ENCODE measurements at regions of chr14 and their contacts with region 1.

Region 1: DNA sequence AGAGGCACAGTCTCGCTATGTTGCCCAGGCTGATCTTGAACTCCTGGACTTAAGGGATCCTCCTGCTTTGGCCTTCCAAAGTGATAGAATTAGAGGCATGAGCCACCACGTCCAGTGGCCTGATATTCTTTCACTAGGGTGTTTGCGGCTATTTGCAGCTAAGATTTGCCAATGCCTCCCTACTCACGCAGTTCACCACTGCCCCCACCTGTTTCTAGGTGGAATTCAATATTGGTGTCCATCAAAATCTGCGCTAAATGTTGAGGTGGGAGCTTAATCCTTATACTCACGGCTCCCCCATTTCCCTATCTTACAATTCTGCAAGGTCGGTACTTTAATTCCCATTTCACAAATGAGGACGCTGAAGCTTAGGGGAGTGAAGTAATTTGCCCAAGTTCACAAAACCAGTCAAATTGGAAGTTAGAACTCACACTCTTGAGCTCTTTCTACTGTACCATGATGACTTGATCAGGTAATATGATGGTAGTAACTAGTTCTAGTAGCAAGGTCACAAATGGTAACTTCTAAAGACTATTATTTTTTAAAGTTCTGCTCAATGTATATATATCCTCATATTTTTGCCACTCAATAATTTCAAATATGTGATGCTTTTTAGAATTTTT is 22.1 kb upstream of the LRRC9 start:
- DNase-seq: peak; percentile 51
- H3K4me3 ChIP-seq: no peak overlapping the region; a peak in 1 of 4 replicates
- H3K27ac ChIP-seq: no peak overlapping the region
- H3K4me1 ChIP-seq: no peaks in the 10 kb centered on the region
- H3K27me3 ChIP-seq: no peaks in the 10 kb centered on the region
- CTCF ChIP-seq: peak; percentile 50
- EP300 ChIP-seq: no peak
- RAD21 ChIP-seq: peak; percentile 91

Region 2: GRCh38 chr14:59564366-59564765 is 333.5 kb before region 1 on chr14:
- CTCF ChIA-PET with region 1: no interaction called
- POLR2A ChIA-PET with region 1: no interaction called
- DNase-seq: no peak
- H3K4me3 ChIP-seq: no peak overlapping the region
- H3K27ac ChIP-seq: no peak overlapping the region
- H3K4me1 ChIP-seq: peaks cover 0 to 7% of the 10 kb centered on the region in 2 experiments; a peak in 2 of 4 replicates
- H3K27me3 ChIP-seq: no peaks in the 10 kb centered on the region; the same call in 1 of the 2 replicates
- CTCF ChIP-seq: no peak
- EP300 ChIP-seq: no peak
- RAD21 ChIP-seq: no peak

Region 3: DNA sequence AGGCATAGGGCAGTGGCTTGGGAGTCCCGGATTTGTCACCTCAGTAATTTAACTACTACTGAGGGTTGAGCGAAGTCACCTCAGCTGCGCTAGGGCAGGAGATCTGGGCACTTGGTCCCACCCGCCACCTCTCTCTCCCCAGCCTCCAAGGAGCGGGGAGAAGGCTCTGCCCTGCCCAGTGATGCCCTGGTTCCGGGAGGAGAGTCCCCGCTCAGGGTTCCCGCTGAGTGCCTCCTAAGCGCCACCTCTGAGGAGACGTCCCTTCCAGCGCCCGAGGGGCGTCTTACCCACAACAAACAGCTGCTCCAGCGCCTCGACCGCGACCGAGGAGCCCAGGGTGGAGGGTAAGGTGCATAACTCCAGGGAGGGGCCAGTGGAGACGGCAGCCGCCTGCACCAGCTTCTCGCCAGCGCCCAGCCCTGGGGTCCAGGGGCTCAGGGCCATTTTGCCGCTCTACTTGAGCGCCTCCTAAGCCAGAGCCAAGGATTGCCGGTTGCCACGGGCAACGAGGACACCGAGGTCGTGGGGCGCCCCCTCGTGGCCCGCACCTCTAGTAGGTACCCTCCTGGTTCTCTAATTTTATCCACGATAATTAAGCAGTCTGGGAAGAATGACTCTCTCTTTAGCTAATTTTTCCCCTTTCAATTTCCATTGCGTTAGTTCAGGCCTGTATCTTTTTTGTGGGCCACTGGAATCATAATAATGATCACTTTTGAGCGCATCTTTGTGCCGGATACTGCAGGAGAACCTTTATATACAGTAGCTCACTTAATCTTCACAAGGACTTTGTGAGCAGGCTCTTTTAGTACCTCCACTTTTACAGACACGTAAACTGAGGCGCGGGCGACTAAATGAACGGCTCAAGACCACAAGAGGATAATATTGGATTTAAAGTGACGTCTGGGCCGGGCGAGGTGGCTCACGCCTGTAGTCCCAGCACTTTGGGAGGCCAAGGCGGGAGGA is 321.3 kb before region 1 on chr14 and contains the start of gene CCDC175:
- CTCF ChIA-PET with region 1: interaction called, 13 read pairs
- POLR2A ChIA-PET with region 1: no interaction called
- DNase-seq: peak; percentile 89
- H3K4me3 ChIP-seq: peak within 1 kb of the TSS; percentile 48 to 59
- H3K27ac ChIP-seq: no peak within 1 kb of the TSS; a peak in 1 of 4 replicates
- H3K4me1 ChIP-seq: peaks cover 0 to 4% of the 10 kb centered on the region in 2 experiments; a peak in 2 of 4 replicates
- H3K27me3 ChIP-seq: peaks cover 6% of the 10 kb centered on the region; the same call in 1 of the 2 replicates
- CTCF ChIP-seq: peak; percentile 78
- EP300 ChIP-seq: no peak
- RAD21 ChIP-seq: peak; percentile 82
- polyA plus RNA-seq, gene CCDC175: not detected in 2 replicates

Region 4: GRCh38 chr14:59679872-59680271 is 218.0 kb before region 1 on chr14:
- CTCF ChIA-PET with region 1: interaction called, 10 read pairs
- POLR2A ChIA-PET with region 1: no interaction called
- DNase-seq: no peak
- H3K4me3 ChIP-seq: no peak overlapping the region
- H3K27ac ChIP-seq: no peak overlapping the region
- H3K4me1 ChIP-seq: no peaks in the 10 kb centered on the region
- H3K27me3 ChIP-seq: no peaks in the 10 kb centered on the region
- CTCF ChIP-seq: no peak
- EP300 ChIP-seq: no peak
- RAD21 ChIP-seq: no peak

Region 5: DNA sequence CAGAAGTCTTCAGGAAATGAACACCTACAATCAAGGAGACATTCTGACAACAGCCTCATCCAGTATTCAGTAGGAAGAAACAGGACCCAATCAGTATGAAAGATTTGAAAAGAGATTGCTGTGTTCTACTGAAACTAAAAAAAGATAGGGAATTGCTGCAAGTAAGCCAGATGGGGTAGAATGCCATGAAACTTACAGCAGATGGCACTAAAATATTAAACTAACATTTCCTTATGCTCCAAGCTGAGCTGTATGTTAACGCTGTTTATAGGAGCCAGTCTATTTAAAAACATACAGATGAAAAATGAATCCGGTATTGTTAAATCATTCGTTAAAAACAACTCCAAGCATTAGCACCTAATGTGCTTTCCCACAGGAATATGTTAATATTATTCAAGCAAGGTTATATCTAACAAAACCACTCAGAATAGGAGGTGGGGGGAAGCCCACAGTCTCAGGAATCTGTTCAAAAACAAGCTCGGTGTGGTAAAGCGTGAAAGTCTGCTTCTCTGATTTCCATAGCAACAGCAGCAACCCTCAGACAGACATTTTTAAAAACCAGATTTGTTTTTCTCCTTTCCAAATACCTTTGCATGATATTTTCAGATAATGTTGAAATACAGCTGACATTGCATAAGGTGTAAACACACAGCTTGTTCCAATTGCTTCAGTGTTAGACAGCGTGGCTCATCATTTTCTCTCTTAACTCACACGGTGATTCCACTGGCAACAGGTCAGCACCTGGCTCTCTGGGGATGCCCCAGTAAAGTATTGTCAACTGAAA is 189.9 kb before region 1 on chr14:
- CTCF ChIA-PET with region 1: interaction called, 158 read pairs
- POLR2A ChIA-PET with region 1: interaction called, 3 read pairs
- DNase-seq: peak; percentile 19
- H3K4me3 ChIP-seq: no peak overlapping the region
- H3K27ac ChIP-seq: no peak overlapping the region
- H3K4me1 ChIP-seq: no peaks in the 10 kb centered on the region
- H3K27me3 ChIP-seq: no peaks in the 10 kb centered on the region
- CTCF ChIP-seq: no peak; the same call in 1 of the 2 replicates
- EP300 ChIP-seq: no peak
- RAD21 ChIP-seq: peak; percentile 73

Region 6: GRCh38 chr14:59870277-59871165 is 27.4 kb before region 1 on chr14 and contains the start of gene RTN1:
- CTCF ChIA-PET with region 1: interaction called, 26 read pairs
- POLR2A ChIA-PET with region 1: no interaction called
- DNase-seq: peak; percentile 82
- H3K4me3 ChIP-seq: peak within 1 kb of the TSS; percentile 61 to 82
- H3K27ac ChIP-seq: no peak within 1 kb of the TSS; a peak in 1 of 4 replicates
- H3K4me1 ChIP-seq: peaks cover 0 to 7% of the 10 kb centered on the region in 2 experiments; a peak in 1 of 4 replicates
- H3K27me3 ChIP-seq: 0 out of 2 replicates have a peak, but pooled peaks cover 16% of the 10 kb centered on the region
- CTCF ChIP-seq: no peak
- EP300 ChIP-seq: no peak
- RAD21 ChIP-seq: no peak
- polyA plus RNA-seq, gene RTN1: 1.6 and 5.0 TPM in 2 replicates

Region 7: GRCh38 chr14:59912443-59912842 is 14.6 kb after region 1 on chr14:
- CTCF ChIA-PET with region 1: interaction called, 17 read pairs
- POLR2A ChIA-PET with region 1: no interaction called
- DNase-seq: no peak
- H3K4me3 ChIP-seq: no peak overlapping the region
- H3K27ac ChIP-seq: no peak overlapping the region
- H3K4me1 ChIP-seq: no peaks in the 10 kb centered on the region
- H3K27me3 ChIP-seq: no peaks in the 10 kb centered on the region
- CTCF ChIP-seq: no peak
- EP300 ChIP-seq: no peak
- RAD21 ChIP-seq: no peak

Region 8: GRCh38 chr14:59926534-59926933 is 28.7 kb after region 1 on chr14:
- CTCF ChIA-PET with region 1: no interaction called
- POLR2A ChIA-PET with region 1: no interaction called
- DNase-seq: no peak
- H3K4me3 ChIP-seq: no peak overlapping the region
- H3K27ac ChIP-seq: no peak overlapping the region
- H3K4me1 ChIP-seq: no peaks in the 10 kb centered on the region
- H3K27me3 ChIP-seq: no peaks in the 10 kb centered on the region
- CTCF ChIP-seq: no peak
- EP300 ChIP-seq: no peak
- RAD21 ChIP-seq: no peak

Region 9: DNA sequence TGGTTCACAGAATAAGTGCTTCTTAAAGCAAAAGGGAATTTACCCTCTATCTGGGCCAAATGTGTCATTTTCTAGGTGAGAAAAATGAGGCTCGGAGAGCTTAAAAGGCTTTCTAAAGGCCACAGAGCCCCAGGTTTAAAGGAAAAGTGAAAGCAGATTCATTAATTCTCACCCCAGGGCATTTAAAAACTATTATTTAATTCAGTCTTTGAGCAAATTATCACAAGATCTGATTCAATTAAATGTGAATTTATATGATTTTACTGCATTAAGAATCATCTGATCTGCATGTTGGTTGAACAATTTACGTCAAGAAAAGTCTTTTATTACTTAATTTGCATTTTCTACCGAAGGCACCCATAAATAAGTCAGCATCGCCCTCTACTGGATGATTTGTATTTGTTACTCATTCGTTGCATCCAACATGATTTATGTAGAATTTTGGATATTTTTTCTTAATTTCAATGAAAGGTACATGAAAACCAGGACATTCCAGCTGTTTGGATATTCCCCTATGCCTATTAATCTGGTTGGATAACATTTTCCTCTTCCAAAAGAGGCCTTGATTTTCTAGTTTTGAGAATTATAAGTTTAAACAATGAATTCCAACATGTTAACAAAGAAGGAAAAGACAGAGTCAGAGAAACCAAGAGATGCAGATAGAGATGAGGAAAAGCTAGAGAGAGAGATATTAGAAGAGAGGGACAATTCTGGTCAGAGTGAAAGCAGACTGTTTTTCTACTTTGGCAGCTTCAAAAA is 286.5 kb after region 1 on chr14:
- CTCF ChIA-PET with region 1: interaction called, 11 read pairs
- POLR2A ChIA-PET with region 1: no interaction called
- DNase-seq: no peak
- H3K4me3 ChIP-seq: peak overlapping the region; percentile 40 to 61
- H3K27ac ChIP-seq: peak overlapping the region in 1 of 2 experiments; percentile 68; a peak in 2 of 4 replicates
- H3K4me1 ChIP-seq: peaks cover 6 to 8% of the 10 kb centered on the region in 2 experiments; a peak in 2 of 4 replicates
- H3K27me3 ChIP-seq: no peaks in the 10 kb centered on the region
- CTCF ChIP-seq: peak; percentile 90
- EP300 ChIP-seq: no peak
- RAD21 ChIP-seq: peak; percentile 93